ENCODE measurements at regions of chr2 and their contacts with region 1.

Region 1: DNA sequence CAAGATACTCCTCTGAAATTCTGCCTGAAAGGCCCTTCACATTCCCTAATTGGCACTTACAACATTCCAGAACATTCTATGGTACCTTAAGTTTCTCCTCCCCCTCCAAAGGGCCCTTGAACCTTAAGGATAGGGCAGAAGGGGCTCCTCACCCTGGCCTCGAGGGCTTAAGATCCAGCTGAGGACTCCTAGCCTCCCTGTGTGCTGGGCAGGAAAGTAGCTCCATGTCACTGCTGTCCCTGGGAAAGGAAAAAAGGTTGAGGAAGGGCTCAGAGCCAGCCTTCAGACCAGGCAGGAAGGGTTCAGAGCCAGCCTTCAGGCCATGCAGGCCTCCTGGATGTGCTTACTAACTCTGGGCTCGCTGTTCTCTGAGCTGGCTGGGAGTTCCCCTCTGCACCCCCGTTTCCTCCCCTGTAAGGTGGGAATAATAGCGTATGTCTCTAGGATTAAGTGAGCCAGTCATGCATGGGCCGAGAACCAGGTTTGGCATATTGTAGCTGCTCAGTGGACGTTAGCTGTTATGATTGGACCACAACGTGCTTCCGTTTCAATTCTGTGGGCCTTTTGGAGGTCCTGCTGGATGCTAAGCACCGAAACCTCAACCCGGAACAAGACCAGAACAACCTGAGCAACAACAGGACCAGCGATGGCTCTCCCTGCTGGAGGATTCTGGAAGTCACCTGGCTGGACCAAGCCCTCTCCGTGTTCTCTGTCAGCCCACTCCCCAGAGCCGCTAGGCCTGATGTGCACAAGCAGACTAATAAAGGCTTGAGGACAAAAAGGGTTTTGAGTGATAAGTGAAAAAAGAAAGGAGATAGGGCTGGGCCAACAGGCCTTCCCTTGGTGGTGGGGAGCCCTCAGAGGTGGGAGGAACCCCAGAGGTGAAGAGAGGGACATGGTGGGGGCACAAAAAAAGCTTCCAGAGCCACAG is 1.0 kb upstream of the B3GNT7 start:
- DNase-seq: peak; percentile 45 to 66 (median 58)
- ATAC-seq: peak; percentile 55
- H3K4me3 ChIP-seq: peak overlapping the region in 1 of 2 donors; percentile 10
- H3K27ac ChIP-seq: peak overlapping the region in 3 of 4 donors; percentile 72 to 85 (median 76)
- H3K4me1 ChIP-seq: peaks cover 52% of the 10 kb centered on the region
- H3K27me3 ChIP-seq: no peaks in the 10 kb centered on the region
- CTCF ChIP-seq: peak in 6 of 7 experiments; percentile 19 to 56 (median 36)
- POLR2A ChIP-seq: peak in 1 of 3 donors; percentile 13

Region 2: DNA sequence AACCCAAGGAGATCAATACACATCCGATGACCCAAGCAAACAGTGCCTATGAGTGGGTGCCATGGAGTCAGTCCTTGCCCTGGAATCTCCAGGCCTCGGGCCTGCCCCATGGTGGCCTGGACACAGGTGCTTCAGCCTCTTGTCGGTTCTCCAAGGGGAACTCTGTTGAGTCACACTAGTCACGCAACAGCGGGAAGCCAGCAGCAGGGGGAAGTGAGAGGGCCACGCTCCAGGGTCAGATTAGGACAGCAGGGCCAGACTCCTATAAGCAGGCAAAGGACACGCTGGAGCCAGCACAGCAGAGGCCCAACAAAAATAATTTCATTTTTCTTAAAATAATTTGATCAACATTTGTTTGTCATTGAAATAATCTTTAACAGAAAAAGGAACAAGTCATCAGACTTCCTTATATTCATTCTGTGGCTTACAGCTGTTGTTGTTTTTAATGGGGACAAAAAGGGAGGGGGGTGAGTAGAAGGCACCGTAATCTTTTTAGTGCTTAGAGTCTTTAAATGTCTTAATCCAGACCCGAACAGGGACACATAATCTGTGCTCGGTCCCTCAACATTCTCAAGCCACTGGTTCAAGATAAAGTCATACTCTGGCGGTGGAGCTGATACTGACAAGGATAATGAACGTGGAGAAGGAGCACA is 212.5 kb before region 1 on chr2:
- intact Hi-C with region 1: no loop called
- DNase-seq: peak in 2 of 4 donors; percentile 37 to 72
- ATAC-seq: peak; percentile 45
- H3K4me3 ChIP-seq: no peak overlapping the region
- H3K27ac ChIP-seq: no peak overlapping the region
- H3K4me1 ChIP-seq: no peaks in the 10 kb centered on the region
- H3K27me3 ChIP-seq: no peaks in the 10 kb centered on the region
- CTCF ChIP-seq: no peak
- POLR2A ChIP-seq: no peak

Region 3: DNA sequence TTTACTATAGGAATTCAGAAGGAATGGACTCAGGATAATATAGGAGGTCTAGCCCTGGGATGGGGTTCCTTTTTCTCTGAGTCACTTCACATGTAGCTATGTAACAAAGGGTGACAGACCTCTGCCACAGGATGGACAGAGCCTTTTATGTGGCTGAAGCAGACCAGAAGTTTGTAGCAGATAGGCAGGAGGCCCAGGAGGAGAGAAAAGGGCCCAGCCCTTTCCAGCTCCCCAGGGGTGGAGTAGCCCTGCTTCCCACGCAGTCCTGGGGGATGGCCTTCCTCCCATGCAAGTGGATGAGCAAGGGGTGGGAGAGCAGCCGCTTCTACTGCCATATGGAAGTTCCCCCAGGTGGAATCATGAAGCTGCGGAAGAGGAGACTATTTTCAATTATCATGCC is 155.8 kb before region 1 on chr2:
- intact Hi-C with region 1: loop called (anchors 10 kb)
- DNase-seq: no peak
- ATAC-seq: no peak
- H3K4me3 ChIP-seq: no peak overlapping the region
- H3K27ac ChIP-seq: no peak overlapping the region
- H3K4me1 ChIP-seq: peaks cover 10% of the 10 kb centered on the region
- H3K27me3 ChIP-seq: no peaks in the 10 kb centered on the region
- CTCF ChIP-seq: no peak
- POLR2A ChIP-seq: no peak

Measured in body of pancreas (tissue), 4 donors.